ENCODE measurements at regions of chr4 and their contacts with region 1.

Region 1: DNA sequence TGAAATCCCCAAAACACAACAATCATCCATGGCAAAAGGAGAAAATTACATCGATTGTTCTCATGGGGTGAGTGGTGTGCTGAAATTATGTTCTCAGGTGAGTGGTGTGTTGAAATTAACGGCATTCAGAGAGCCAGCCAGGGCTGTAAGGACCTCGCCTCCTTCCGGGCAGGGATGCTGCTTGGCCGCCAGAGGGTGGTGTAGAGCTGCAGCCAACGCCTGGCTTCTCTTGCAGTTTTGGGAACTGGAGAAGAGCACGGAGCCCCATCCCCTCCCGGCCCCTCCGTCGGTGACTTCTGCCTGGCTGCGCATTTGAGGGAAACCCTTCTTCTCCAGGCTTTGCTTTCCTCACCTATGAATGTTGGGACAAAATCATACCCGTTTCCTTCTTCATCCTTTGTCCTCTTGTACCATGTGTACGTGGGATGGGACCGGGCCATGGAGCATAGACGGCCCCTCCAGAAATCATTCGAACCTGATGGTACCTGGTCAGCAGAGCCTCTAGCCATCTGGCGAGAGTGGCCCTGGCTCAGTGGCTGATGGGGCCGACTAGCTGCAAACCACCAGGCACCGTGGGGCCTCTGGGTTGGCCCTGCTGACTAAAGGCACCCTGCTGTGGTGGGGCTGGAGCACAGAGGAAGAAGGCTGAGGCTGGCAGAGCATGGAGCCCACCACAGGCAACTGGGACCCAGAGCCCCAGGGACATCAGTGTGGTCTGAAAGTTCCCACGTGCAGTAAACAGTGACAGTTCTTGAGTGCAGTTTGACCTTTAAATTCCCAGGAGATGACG is 28.4 kb downstream of the TRMT44 start:
- DNase-seq: peak; percentile 57 to 64 (median 62)
- ATAC-seq: peak; percentile 60
- H3K4me3 ChIP-seq: no peak overlapping the region
- H3K27ac ChIP-seq: no peak overlapping the region
- H3K4me1 ChIP-seq: no peaks in the 10 kb centered on the region
- H3K27me3 ChIP-seq: no peaks in the 10 kb centered on the region
- CTCF ChIP-seq: peak; percentile 74 to 92 (median 81)
- POLR2A ChIP-seq: no peak

Region 2: DNA sequence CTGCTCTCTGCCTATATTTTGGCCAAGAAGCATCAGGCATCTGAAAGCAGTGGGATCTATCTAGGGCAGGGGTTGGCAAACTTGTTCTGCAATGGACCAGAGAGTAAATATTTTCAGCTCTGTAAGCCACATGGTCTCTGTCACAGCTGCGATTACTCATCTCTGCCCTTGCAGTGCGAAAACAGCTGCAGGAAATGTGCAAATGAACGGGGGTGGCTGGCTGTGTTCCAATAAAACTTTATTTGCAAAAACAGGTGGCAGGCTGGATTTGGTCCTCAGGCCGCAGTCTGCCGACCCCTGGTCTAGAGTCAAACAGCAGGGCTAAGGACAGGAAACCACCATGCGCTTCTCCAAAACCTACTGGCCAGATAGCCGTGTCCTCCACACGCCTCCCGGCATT is 77.0 kb before region 1 on chr4:
- intact Hi-C with region 1: no loop called
- DNase-seq: peak; percentile 24 to 51 (median 30)
- ATAC-seq: peak; percentile 25
- H3K4me3 ChIP-seq: no peak overlapping the region
- H3K27ac ChIP-seq: no peak overlapping the region
- H3K4me1 ChIP-seq: no peaks in the 10 kb centered on the region
- H3K27me3 ChIP-seq: no peaks in the 10 kb centered on the region
- CTCF ChIP-seq: no peak
- POLR2A ChIP-seq: no peak

Region 3: DNA sequence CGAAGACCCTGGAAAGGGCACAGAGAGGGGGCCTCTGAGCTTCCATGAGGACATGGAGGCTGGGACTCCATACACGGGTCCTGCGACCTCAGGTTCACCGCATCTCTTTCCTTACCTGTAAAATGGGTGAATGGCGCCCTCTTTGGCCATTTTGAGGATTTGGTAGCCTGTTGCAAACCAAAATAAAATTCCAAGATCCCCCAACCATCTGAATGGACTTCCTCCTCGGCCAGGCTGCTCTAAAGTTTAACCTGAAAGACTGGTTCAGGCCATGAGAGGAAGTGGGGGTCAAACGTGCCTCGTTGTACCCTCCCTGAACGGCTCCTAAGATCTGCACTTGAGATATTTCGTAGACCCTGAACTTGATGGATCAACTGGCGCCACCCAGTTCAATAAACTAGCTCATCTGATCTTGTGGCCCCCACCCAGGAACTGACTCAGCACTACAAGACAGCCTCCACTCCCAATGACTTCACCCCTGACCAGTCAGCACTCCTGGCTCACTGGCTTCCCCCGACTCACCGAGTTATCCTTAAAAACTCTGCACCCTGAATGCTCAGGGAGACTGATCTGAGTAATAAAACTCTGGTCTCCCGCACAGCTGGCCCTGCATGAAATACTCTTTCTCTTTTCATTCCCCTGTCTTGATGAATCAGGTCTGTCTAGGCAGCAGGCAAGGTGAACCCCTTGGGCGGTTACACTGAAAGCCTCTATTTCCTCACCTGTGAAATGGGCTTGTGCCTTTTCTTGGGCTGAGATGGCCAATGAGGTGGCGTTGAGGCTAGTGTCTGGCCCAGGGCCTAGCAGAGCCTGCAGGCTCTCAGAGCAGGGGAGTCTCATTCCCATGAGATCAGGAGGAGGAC is 78.4 kb after region 1 on chr4:
- intact Hi-C with region 1: loop called (anchors 5 kb)
- DNase-seq: peak; percentile 43 to 54 (median 50)
- ATAC-seq: peak; percentile 74
- H3K4me3 ChIP-seq: no peak overlapping the region
- H3K27ac ChIP-seq: no peak overlapping the region
- H3K4me1 ChIP-seq: no peaks in the 10 kb centered on the region
- H3K27me3 ChIP-seq: no peaks in the 10 kb centered on the region
- CTCF ChIP-seq: peak; percentile 23 to 72 (median 67)
- POLR2A ChIP-seq: no peak

Region 4: DNA sequence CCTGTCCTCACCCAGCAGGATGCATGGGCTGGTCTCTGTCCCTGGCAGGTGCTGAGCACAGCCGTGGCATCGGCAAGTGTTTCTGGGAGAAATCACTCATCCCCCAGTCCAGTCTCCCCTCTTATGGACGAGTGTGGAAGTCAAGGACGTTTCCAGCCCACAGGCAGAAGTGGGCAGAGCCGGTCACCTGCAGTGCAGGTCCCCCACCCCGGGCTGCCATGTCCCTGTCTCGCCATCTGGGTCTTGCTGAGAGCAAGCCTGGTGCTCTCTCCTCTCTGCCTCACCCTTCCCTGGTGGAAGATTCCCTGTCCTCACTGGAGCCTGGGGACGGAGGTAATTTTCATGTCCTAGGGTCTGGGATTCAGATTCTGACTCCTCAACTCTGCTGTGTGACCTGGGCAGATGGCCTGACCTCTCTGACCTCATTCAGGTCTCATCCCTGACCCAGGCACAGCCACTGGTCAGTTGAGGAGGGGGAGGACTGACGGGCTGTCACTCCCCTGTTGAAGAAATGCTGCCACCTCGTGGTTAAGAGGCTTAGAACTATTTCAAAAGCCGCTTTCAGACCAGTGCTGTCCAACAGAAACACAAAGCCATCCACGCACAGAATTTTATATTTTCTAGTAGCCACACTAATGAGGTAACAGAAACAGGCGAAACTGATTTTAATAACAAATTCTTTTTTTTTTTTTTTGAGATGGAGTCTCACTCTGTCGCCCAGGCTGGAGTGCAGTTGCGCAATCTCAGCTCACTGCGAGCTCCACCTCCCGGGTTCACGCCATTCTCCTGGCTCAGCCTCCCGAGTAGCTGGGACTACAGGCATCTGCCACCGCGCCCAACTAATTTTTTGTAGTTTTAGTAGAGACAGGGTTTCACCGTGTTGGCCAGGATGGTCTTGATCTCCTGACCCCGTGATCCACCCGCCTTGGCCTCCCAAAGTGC is 125.4 kb after region 1 on chr4:
- intact Hi-C with region 1: loop called (anchors 5 kb)
- DNase-seq: peak; percentile 46 to 62 (median 54)
- ATAC-seq: peak; percentile 66
- H3K4me3 ChIP-seq: no peak overlapping the region
- H3K27ac ChIP-seq: no peak overlapping the region
- H3K4me1 ChIP-seq: peaks cover 8% of the 10 kb centered on the region
- H3K27me3 ChIP-seq: peaks cover 0 to 8% of the 10 kb centered on the region in 2 donors
- CTCF ChIP-seq: peak; percentile 39 to 61 (median 55)
- POLR2A ChIP-seq: no peak